Mammary epithelial cell (primary cell): ENCODE measurements at regions of chr12 and their contacts with region 1.

Region 1: DNA sequence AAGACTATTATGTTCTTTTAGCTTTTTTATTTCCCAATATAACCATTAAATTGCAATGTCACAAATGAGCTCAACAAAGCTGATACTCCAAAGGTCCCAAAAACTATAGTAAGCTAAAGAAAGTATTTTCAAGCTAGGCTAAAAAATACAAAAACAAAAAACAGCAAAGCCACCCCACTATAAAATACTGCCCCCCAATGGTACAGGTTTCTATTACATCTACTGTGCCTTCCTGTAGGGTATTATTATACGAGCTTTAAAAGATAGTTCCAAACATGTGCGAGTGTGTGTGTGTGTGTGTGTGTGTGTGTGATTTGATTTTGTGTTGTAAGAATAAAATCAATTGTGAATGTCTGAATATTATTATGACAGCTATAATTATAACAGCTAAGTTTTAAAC is 1.1 kb downstream of the IFNG start:
- DNase-seq: peak; percentile 35
- H3K4me3 ChIP-seq: no peak overlapping the region
- H3K27ac ChIP-seq: no peak overlapping the region
- H3K4me1 ChIP-seq: peaks cover 9% of the 10 kb centered on the region
- H3K27me3 ChIP-seq: no peaks in the 10 kb centered on the region
- CTCF ChIP-seq: peak; percentile 49 to 75

Region 2: DNA sequence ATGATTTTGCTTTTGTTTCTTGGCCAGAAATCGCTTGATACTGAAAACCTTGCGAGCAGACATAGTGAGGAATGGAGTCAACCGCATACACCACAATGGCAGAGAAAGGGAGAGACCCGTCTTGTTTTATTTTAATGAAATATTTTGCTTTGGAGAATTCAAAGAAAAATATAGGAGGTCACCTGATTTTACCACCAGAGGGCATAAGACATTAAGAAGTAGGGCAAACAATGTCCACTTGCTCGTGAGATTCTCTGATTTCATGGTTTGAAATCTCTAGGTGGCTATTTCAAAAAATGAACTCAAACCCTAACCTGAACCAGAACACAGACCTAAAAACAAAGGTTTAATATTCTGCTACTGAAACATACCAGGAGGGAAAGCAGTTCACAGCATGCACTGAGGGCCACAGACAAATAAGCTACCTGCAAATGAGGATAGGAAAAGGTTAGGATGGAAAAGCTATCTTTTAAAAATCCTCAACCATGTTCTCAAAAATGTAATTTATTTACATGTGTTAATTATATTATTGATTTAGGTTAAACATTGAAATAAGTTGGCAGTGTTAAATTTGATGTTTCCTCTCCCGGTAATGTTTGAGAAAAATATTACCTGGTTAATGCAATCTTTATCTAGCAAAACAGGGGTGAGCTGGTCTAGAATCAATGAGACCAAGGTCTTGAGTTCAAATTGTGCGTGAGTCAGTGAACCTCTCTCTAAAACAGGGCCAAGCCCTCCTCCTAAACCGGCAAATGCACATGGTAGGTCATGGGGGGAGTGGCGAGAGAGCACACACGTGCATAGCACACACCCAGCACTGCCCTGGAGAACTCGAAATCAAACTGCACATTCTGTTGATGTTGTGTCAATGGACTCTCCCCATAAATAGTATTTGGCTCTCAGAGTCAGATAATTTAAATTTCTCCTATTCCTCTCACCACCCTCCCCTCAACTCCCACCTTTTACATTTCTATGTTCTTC is 156.7 kb before region 1 on chr12:
- CTCF ChIA-PET with region 1: no interaction called
- dilution Hi-C with region 1: no loop called
- in situ Hi-C with region 1: no loop called
- intact Hi-C with region 1: loop called (anchors 1 kb)
- DNase-seq: no peak
- H3K4me3 ChIP-seq: no peak overlapping the region
- H3K27ac ChIP-seq: no peak overlapping the region
- H3K4me1 ChIP-seq: no peaks in the 10 kb centered on the region
- H3K27me3 ChIP-seq: no peaks in the 10 kb centered on the region
- CTCF ChIP-seq: peak; percentile 37 to 46

Region 3: GRCh38 chr12:68074306-68075027 is 84.0 kb before region 1 on chr12:
- CTCF ChIA-PET with region 1: no interaction called
- dilution Hi-C with region 1: loop called (anchors 5 kb)
- in situ Hi-C with region 1: no loop called
- intact Hi-C with region 1: no loop called
- DNase-seq: no peak
- H3K4me3 ChIP-seq: no peak overlapping the region
- H3K27ac ChIP-seq: no peak overlapping the region
- H3K4me1 ChIP-seq: no peaks in the 10 kb centered on the region
- H3K27me3 ChIP-seq: no peaks in the 10 kb centered on the region
- CTCF ChIP-seq: no peak

Region 4: GRCh38 chr12:68113644-68114043 is 44.8 kb before region 1 on chr12:
- CTCF ChIA-PET with region 1: no interaction called
- dilution Hi-C with region 1: no loop called
- in situ Hi-C with region 1: no loop called
- intact Hi-C with region 1: loop called (anchors 1 kb)
- DNase-seq: no peak
- H3K4me3 ChIP-seq: no peak overlapping the region
- H3K27ac ChIP-seq: no peak overlapping the region
- H3K4me1 ChIP-seq: no peaks in the 10 kb centered on the region
- H3K27me3 ChIP-seq: no peaks in the 10 kb centered on the region
- CTCF ChIP-seq: peak; percentile 44 to 55